Uterus (tissue), 4 donors: ENCODE measurements at regions of chr5 and their contacts with region 1.

Region 1: DNA sequence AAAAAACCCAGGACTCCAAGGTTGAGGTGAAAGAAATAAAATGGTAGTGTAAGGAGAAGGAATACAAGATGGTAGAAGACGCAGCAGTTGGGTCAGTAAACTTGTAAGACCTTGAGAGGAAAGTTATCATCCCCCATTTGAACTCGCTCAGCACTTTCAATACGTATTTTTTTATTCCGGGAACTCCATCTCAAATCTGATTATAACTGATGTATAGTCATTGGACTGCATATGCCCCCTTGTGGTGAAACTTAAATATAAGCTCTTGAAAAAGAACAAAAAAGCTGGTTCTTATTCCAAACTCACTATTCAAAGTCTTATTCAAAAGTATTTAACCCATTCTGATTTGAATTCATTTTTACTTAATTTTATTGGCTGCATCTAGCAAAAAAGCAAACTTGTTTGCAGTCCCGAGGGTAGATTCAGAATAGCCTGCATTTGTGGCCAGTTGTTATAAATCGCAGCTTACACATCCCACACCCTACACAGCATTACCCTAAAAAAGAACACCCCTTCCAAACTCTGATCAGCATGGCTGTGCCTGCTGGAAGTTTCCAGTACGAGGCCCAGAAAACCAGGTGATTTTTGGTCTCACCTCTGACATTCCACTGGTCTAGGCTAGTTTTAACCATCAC is 118.0 kb downstream of the ESM1 start:
- DNase-seq: no peak
- H3K4me3 ChIP-seq: no peak overlapping the region
- H3K27ac ChIP-seq: no peak overlapping the region
- H3K4me1 ChIP-seq: no peaks in the 10 kb centered on the region
- H3K27me3 ChIP-seq: no peaks in the 10 kb centered on the region
- CTCF ChIP-seq: peak; percentile 61 to 64 (median 63)
- POLR2A ChIP-seq: no peak

Region 2: DNA sequence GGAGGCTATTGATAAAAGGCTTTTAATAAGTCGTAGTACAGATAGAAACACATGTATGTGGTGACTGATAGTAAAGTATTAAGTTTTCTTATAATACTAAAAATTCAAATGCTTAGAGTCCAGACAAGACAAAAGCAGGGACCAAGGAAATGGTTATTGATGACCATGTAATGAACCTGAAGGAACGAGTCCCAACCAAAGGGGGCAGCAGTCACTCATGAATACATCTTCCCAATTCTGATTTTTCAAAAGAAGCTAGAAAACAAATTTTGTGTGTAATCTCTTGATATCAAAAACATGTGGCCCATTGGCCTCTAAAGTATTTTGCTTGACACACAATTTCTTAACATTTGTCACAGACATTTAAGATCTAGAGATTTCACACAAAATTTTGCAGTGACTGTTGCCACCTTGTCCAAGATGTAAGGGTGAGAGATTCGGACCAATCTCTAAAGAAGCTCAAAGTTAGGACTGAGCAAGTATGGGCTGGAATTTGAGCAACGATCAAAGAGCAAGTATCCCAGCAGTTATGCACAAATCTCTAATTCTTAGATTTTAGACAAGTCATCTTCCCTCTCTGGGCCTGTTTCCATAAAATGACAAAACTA is 623.9 kb before region 1 on chr5:
- intact Hi-C with region 1: loop called (anchors 10 kb)
- DNase-seq: no peak
- H3K4me3 ChIP-seq: no peak overlapping the region
- H3K27ac ChIP-seq: no peak overlapping the region
- H3K4me1 ChIP-seq: no peaks in the 10 kb centered on the region
- H3K27me3 ChIP-seq: no peaks in the 10 kb centered on the region
- CTCF ChIP-seq: peak; percentile 41 to 54 (median 46)
- POLR2A ChIP-seq: no peak

Region 3: DNA sequence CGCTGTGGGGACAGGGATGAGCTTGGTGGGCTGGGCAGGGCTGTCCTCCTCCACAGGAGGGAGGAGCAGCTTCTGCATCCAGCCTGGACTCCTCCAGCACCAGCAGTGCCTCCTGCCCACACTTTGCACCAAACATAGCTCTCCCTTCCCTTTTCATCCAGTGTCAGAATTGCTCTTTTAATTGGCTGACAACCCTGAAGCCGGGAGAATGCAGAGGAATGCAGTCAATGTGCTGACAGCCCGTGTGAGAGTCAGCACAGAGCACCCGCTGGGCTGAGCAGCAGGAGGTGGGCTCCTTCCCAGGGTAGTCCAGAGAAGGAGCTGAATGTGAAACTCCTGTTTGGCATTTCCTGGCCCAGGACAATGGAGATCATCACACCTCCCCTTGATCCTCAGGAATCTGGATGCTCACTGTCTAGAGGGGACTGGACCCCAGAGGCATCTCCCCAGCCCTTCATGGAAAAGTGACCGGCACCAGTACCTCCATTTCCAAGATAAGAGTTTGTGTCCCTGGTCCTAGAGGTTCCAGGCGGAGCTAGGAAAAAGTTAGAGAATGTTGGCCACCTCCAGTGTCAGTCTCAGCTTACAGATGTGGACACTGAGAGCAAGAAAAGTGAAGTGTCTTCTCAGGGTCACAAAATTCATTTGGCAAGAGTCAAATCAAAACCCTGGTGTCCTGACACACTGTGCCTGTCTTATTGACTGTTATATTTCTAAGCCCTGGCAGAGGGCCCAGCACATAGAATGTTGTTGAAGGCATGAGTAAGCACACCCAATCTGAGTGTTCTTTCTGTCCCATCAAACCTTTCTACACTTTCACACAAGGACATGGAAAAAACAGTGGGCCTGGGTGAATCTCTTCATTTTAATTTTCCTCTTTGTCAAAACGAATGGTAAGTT is 147.8 kb before region 1 on chr5:
- intact Hi-C with region 1: no loop called
- DNase-seq: no peak
- H3K4me3 ChIP-seq: no peak overlapping the region
- H3K27ac ChIP-seq: peak overlapping the region in 1 of 2 donors; percentile 8
- H3K4me1 ChIP-seq: peaks cover 0 to 6% of the 10 kb centered on the region in 2 donors
- H3K27me3 ChIP-seq: no peaks in the 10 kb centered on the region
- CTCF ChIP-seq: no peak
- POLR2A ChIP-seq: no peak

Region 4: GRCh38 chr5:54799645-54800044 is 67.8 kb before region 1 on chr5:
- intact Hi-C with region 1: no loop called
- DNase-seq: no peak
- H3K4me3 ChIP-seq: no peak overlapping the region
- H3K27ac ChIP-seq: no peak overlapping the region
- H3K4me1 ChIP-seq: no peaks in the 10 kb centered on the region
- H3K27me3 ChIP-seq: no peaks in the 10 kb centered on the region
- CTCF ChIP-seq: no peak
- POLR2A ChIP-seq: no peak